Activated CD4-positive, alpha-beta memory T cell treated with anti-CD3 and anti-CD28 coated beads for 36 hours (primary cell): ENCODE measurements at regions of chr5 and their contacts with region 1.

Region 1: DNA sequence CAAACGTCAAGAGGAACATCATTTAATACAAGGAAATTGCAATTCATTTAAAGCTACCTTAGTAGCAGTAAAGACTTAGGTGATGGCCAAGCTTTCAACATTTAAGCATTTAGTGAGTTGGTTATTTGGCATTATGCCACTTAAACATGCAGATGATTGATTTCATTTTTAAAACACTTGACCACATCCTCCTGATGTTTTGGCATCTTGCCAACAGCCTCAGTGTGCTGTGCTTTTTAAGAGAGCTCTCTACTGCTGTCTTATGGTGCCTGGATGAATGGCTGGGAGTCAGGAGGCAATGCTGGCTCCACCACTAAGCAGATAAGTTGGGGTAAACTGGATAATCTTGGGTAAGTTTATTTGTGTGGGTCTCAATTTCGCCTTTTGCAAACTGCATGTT is 364.5 kb downstream of the MAN2A1 start:
- DNase-seq: peak; percentile 79
- H3K4me3 Mint-ChIP-seq: no peak overlapping the region
- H3K27ac Mint-ChIP-seq: peak overlapping the region; percentile 67
- H3K4me1 Mint-ChIP-seq: peaks cover 30% of the 10 kb centered on the region
- H3K27me3 Mint-ChIP-seq: no peaks in the 10 kb centered on the region

Region 2: GRCh38 chr5:109863752-109864151 is 190.5 kb before region 1 on chr5:
- CTCF ChIA-PET with region 1: no interaction called
- POLR2A ChIA-PET with region 1: no interaction called
- intact Hi-C with region 1: loop called (anchors 5 kb)
- DNase-seq: no peak
- H3K4me3 Mint-ChIP-seq: no peak overlapping the region
- H3K27ac Mint-ChIP-seq: peak overlapping the region; percentile 21
- H3K4me1 Mint-ChIP-seq: peaks cover 40% of the 10 kb centered on the region
- H3K27me3 Mint-ChIP-seq: no peaks in the 10 kb centered on the region

Region 3: GRCh38 chr5:109953761-109954160 is 100.5 kb before region 1 on chr5:
- CTCF ChIA-PET with region 1: no interaction called
- POLR2A ChIA-PET with region 1: no interaction called
- intact Hi-C with region 1: no loop called
- DNase-seq: no peak
- H3K4me3 Mint-ChIP-seq: no peak overlapping the region
- H3K27ac Mint-ChIP-seq: no peak overlapping the region
- H3K4me1 Mint-ChIP-seq: no peaks in the 10 kb centered on the region
- H3K27me3 Mint-ChIP-seq: no peaks in the 10 kb centered on the region

Region 4: DNA sequence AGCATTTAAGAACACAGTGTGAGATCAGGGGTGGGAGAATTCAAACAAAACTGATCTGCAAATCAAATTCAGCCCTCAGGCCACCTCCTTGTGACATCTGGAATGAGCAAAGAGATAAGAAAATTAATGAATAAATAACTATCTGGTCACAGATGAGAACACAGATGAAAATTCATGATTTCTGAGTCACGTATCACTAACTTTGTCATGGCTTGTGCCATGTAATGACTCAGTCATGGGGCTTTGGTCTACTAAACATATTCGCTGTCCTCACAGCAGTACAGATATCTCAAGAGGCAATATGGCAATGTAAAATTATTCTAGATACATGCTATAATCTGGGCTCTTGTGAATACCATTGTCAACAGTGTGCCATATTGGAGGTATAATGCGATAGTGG is 90.1 kb before region 1 on chr5:
- CTCF ChIA-PET with region 1: no interaction called
- POLR2A ChIA-PET with region 1: no interaction called
- intact Hi-C with region 1: loop called (anchors 2 kb)
- DNase-seq: no peak
- H3K4me3 Mint-ChIP-seq: no peak overlapping the region
- H3K27ac Mint-ChIP-seq: no peak overlapping the region
- H3K4me1 Mint-ChIP-seq: peaks cover 12% of the 10 kb centered on the region
- H3K27me3 Mint-ChIP-seq: no peaks in the 10 kb centered on the region

Region 5: GRCh38 chr5:110040178-110040577 is 14.1 kb before region 1 on chr5:
- CTCF ChIA-PET with region 1: no interaction called
- POLR2A ChIA-PET with region 1: no interaction called
- intact Hi-C with region 1: no loop called
- DNase-seq: no peak
- H3K4me3 Mint-ChIP-seq: no peak overlapping the region
- H3K27ac Mint-ChIP-seq: no peak overlapping the region
- H3K4me1 Mint-ChIP-seq: peaks cover 10% of the 10 kb centered on the region
- H3K27me3 Mint-ChIP-seq: no peaks in the 10 kb centered on the region

Region 6: DNA sequence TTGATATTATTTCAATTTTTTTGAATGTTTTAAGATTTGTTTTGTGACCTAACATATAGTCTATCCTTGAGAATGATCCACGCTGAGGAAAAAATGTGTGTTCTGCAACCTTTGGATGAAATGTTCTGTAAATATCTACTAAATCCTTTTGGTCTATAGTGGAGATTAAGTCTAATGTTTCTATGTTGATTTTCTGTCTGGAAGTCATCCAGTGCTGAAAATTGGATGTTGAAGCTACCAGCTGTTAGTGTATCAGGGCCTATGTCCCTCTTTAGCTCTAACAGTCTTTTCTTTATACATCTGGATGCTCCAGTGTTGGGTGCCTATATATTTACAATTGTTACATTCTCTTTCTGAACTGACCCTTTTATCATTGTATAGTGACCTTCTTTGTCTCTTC is 249.9 kb after region 1 on chr5:
- CTCF ChIA-PET with region 1: no interaction called
- POLR2A ChIA-PET with region 1: no interaction called
- intact Hi-C with region 1: no loop called
- DNase-seq: no peak
- H3K4me3 Mint-ChIP-seq: no peak overlapping the region
- H3K27ac Mint-ChIP-seq: no peak overlapping the region
- H3K4me1 Mint-ChIP-seq: no peaks in the 10 kb centered on the region
- H3K27me3 Mint-ChIP-seq: peaks cover 3% of the 10 kb centered on the region